MCF 10A (cell line): ENCODE measurements at regions of chr19 and their contacts with region 1.

Region 1: GRCh38 chr19:14081325-14082093 is 4.1 kb downstream of the C19orf67 start:
- DNase-seq: peak; percentile 100
- H3K4me3 Mint-ChIP-seq: peak overlapping the region; percentile 90
- H3K27ac Mint-ChIP-seq: peak overlapping the region; percentile 96
- H3K4me1 Mint-ChIP-seq: no peaks in the 10 kb centered on the region
- H3K27me3 Mint-ChIP-seq: no peaks in the 10 kb centered on the region
- CTCF ChIP-seq: no peak

Region 2: GRCh38 chr19:14006243-14006765 is 75.2 kb before region 1 on chr19 and contains the start of gene RFX1:
- CTCF ChIA-PET with region 1: no interaction called
- POLR2A ChIA-PET with region 1: interaction called, 14 read pairs
- intact Hi-C with region 1: loop called (anchors 2 kb)
- DNase-seq: peak; percentile 100
- H3K4me3 Mint-ChIP-seq: peak within 1 kb of the TSS; percentile 90
- H3K27ac Mint-ChIP-seq: peak within 1 kb of the TSS; percentile 100
- H3K4me1 Mint-ChIP-seq: peaks cover 4% of the 10 kb centered on the region
- H3K27me3 Mint-ChIP-seq: no peaks in the 10 kb centered on the region
- CTCF ChIP-seq: no peak
- total RNA-seq, gene RFX1: 16.8 and 17.7 TPM in 2 replicates

Region 3: DNA sequence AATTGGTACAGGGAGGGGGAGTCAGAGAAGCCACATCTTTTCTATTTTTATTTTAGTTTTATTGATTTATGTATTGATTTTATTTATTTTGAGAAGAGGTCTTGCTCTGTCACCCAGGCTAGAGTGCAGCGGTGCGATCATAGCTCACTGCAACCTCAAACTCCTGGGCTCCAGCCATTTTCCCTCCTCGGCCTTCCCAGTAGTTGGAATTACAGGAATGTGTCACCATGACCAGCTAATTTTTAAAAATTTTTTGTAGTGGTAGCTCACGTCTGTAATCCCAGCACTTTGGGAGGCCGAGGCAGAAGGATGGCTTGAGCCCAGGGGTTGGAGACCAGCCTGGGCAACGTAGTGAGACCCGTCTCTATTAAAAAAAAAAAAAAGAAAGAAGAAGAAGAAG is 45.8 kb before region 1 on chr19:
- CTCF ChIA-PET with region 1: no interaction called
- POLR2A ChIA-PET with region 1: no interaction called
- intact Hi-C with region 1: no loop called
- DNase-seq: no peak
- H3K4me3 Mint-ChIP-seq: no peak overlapping the region
- H3K27ac Mint-ChIP-seq: no peak overlapping the region
- H3K4me1 Mint-ChIP-seq: peaks cover 12% of the 10 kb centered on the region
- H3K27me3 Mint-ChIP-seq: no peaks in the 10 kb centered on the region
- CTCF ChIP-seq: no peak

Region 4: DNA sequence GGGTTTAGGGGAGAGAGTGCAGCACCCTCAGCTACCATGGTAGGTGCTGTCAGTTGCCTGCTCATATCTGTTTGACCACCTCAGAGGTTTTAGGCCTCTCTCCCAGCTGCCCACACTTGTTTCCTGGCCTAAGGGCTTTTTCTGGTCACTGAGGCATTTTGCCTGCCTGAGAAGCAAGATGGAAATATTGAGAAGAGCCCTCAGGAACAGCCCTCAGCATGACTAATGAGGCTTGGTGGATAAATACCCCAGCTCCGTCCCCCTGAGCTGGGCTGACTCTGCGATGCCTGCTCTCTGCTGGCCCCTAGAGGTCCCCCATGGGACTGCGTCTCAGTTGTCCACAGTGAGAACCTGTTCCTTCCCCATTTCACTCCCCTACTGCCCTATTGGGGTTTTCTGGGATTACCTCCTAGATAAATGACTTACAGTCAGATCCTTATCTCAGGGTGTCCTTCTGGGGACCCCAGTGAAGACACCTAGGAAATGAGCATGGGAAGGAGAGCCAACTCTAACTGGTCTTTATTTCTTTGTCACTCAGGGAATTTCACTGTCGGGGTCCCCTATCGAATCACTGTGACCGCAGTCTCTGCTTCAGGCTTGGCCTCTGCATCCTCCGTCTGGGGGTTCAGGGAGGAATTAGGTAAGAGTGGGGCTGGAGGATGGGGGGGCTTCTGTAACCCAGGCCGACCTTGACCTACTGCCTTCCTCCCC is 32.9 kb before region 1 on chr19:
- CTCF ChIA-PET with region 1: interaction called, 10 read pairs
- POLR2A ChIA-PET with region 1: no interaction called
- intact Hi-C with region 1: no loop called
- DNase-seq: peak; percentile 39
- H3K4me3 Mint-ChIP-seq: no peak overlapping the region
- H3K27ac Mint-ChIP-seq: no peak overlapping the region
- H3K4me1 Mint-ChIP-seq: no peaks in the 10 kb centered on the region
- H3K27me3 Mint-ChIP-seq: no peaks in the 10 kb centered on the region
- CTCF ChIP-seq: peak; percentile 78

Region 5: GRCh38 chr19:14117668-14118164 is 36.2 kb after region 1 on chr19 and contains the start of gene PRKACA:
- CTCF ChIA-PET with region 1: no interaction called
- POLR2A ChIA-PET with region 1: no interaction called
- intact Hi-C with region 1: loop called (anchors 5 kb)
- DNase-seq: peak; percentile 99
- H3K4me3 Mint-ChIP-seq: peak within 1 kb of the TSS; percentile 83
- H3K27ac Mint-ChIP-seq: peak within 1 kb of the TSS; percentile 93
- H3K4me1 Mint-ChIP-seq: peaks cover 18% of the 10 kb centered on the region
- H3K27me3 Mint-ChIP-seq: no peaks in the 10 kb centered on the region
- CTCF ChIP-seq: no peak
- total RNA-seq, gene PRKACA: 44.7 and 49.8 TPM in 2 replicates